Panc1 (cell line): ENCODE measurements at regions of chr2 and their contacts with region 1.

Region 1: GRCh38 chr2:135741395-135742324 is at the start of gene UBXN4:
- DNase-seq: peak; percentile 93
- ATAC-seq: peak; percentile 97
- H3K4me3 ChIP-seq: peak within 1 kb of the TSS; percentile 88 to 96
- H3K27ac ChIP-seq: peak within 1 kb of the TSS; percentile 96
- H3K4me1 ChIP-seq: peaks cover 16% of the 10 kb centered on the region
- H3K27me3 ChIP-seq: no peaks in the 10 kb centered on the region
- CTCF ChIP-seq: peak; percentile 79
- total RNA-seq, gene UBXN4: 83.7 TPM

Region 2: DNA sequence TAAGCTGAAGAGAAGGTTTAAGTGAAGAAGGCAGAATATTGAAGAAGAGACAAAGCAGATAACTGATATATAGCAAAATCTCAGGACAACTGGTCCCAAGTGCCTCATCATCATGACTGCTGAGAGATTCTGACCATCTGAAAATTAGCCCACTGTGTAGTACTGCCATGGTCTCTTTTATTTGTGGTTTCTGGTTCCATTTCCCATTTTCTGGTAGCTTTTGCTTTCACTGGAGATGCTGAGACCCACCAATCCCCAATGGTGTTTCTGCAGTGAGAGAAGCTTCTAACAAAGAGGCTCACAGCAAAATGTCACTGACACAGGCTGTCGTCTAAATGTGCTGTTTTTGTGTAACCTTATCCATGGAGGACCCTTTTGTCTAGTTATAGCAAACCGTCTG is 1102.4 kb before region 1 on chr2:
- CTCF ChIA-PET with region 1: no interaction called
- POLR2A ChIA-PET with region 1: interaction called, 16 read pairs
- in situ Hi-C with region 1: no loop called
- intact Hi-C with region 1: no loop called
- DNase-seq: no peak
- ATAC-seq: no peak
- H3K4me3 ChIP-seq: no peak overlapping the region
- H3K27ac ChIP-seq: no peak overlapping the region
- H3K4me1 ChIP-seq: no peaks in the 10 kb centered on the region
- H3K27me3 ChIP-seq: 0 out of 2 replicates have a peak, but pooled peaks cover 5% of the 10 kb centered on the region
- CTCF ChIP-seq: no peak

Region 3: DNA sequence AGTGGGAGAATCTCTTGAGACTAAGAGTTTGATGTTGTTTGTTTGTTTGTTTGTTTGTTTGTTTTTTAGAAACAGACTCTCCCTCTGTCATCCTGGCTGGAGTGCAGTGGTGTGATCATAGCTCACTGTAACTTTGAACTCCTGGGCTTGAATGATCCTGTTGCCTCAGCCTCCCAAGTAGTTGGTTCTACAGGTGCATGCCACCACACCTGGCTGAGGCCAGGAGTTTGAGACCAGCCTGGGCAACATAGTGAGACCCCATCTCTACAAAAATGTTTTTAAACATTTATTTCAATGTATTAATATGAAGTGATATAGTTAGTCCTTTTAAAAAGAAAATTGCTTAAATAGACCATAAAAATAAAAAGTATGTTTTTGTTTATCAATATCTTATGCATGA is 730.0 kb before region 1 on chr2:
- CTCF ChIA-PET with region 1: no interaction called
- POLR2A ChIA-PET with region 1: interaction called, 15 read pairs
- in situ Hi-C with region 1: no loop called
- intact Hi-C with region 1: no loop called
- DNase-seq: no peak
- ATAC-seq: no peak
- H3K4me3 ChIP-seq: peak overlapping the region in 1 of 2 experiments; percentile 18; a peak in 1 of 4 replicates
- H3K27ac ChIP-seq: no peak overlapping the region
- H3K4me1 ChIP-seq: no peaks in the 10 kb centered on the region
- H3K27me3 ChIP-seq: no peaks in the 10 kb centered on the region
- CTCF ChIP-seq: no peak

Region 4: GRCh38 chr2:135650721-135651120 is 90.9 kb before region 1 on chr2:
- CTCF ChIA-PET with region 1: no interaction called
- POLR2A ChIA-PET with region 1: interaction called, 11 read pairs
- in situ Hi-C with region 1: no loop called
- intact Hi-C with region 1: no loop called
- DNase-seq: no peak
- ATAC-seq: no peak
- H3K4me3 ChIP-seq: no peak overlapping the region
- H3K27ac ChIP-seq: no peak overlapping the region
- H3K4me1 ChIP-seq: no peaks in the 10 kb centered on the region
- H3K27me3 ChIP-seq: no peaks in the 10 kb centered on the region
- CTCF ChIP-seq: no peak

Region 5: DNA sequence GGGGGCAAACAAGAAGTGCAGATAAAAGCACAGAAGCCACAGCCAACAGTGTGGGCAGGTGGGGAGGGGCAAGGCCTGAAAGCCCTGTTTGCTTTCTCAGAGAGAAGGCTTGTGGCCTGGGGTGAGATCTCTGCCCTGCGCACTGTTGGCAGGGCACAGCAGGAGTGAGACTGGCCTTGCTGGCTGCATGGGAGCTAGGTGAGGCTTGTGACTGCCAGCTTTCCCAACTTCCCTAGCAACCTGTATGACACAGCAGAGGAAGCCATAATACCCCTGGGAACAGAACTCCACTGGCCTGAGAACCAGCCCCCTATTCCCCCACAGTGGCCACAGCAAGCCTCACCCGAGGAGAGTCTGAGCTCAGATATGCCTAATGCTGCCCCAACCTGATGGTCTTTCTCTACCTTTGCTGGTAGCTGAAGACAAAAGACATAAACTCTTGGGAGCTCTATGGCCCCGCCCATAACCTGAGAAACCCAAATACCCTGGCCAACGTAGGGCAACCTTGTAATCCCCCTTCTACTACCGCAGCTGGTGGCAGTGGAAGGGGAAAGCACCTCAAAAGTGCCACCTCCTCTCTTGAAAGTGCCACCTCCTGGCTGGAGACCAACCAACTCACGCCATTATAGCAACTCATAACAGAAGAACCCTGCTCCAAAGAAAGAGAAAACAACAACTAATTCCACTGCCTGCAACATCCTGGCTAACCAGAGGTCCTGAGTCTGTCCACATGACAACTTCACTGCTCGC is 50.9 kb after region 1 on chr2:
- CTCF ChIA-PET with region 1: no interaction called
- POLR2A ChIA-PET with region 1: interaction called, 18 read pairs
- in situ Hi-C with region 1: no loop called
- intact Hi-C with region 1: no loop called
- DNase-seq: no peak
- ATAC-seq: 0 out of 2 replicates have a peak, but pooled peaks have one; percentile 44
- H3K4me3 ChIP-seq: no peak overlapping the region
- H3K27ac ChIP-seq: no peak overlapping the region
- H3K4me1 ChIP-seq: no peaks in the 10 kb centered on the region
- H3K27me3 ChIP-seq: no peaks in the 10 kb centered on the region
- CTCF ChIP-seq: no peak

Region 6: DNA sequence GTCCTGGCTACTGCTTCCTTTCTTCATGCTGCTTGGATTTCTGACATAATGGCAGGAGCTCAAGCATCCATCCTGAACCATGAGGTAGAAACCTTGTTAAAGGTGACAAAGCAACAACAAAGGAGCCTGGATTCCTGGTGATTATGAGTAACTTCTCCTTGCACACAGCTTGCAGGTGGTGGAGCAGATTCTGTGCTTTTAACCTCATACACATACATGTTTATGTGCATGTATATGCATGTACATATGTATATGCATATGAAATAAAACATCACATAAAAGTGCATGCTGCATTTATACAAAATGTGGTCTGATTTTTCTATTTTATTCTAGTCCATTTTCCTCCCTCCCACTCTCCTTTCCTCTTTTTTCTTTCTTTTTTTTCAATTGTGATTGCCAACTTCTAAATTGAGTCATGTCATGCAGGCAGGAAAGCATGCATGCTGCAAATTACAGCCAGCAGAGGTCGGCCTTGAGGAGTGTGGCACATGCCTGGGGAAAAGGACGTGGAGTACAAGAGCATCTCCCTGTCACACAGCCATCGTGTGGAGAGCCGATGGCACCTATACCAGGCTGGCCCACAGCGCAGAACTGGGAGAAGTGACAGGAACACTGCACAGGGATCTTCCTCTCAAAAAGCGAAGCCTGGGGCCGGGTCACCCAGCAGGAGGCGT is 77.4 kb after region 1 on chr2:
- CTCF ChIA-PET with region 1: no interaction called
- POLR2A ChIA-PET with region 1: interaction called, 12 read pairs
- in situ Hi-C with region 1: no loop called
- intact Hi-C with region 1: no loop called
- DNase-seq: no peak
- ATAC-seq: peak; percentile 81
- H3K4me3 ChIP-seq: no peak overlapping the region
- H3K27ac ChIP-seq: no peak overlapping the region
- H3K4me1 ChIP-seq: no peaks in the 10 kb centered on the region
- H3K27me3 ChIP-seq: 0 out of 2 replicates have a peak, but pooled peaks cover 2% of the 10 kb centered on the region
- CTCF ChIP-seq: peak; percentile 77